BJ (cell line): ENCODE measurements at regions of chr17 and their contacts with region 1.

Region 1: DNA sequence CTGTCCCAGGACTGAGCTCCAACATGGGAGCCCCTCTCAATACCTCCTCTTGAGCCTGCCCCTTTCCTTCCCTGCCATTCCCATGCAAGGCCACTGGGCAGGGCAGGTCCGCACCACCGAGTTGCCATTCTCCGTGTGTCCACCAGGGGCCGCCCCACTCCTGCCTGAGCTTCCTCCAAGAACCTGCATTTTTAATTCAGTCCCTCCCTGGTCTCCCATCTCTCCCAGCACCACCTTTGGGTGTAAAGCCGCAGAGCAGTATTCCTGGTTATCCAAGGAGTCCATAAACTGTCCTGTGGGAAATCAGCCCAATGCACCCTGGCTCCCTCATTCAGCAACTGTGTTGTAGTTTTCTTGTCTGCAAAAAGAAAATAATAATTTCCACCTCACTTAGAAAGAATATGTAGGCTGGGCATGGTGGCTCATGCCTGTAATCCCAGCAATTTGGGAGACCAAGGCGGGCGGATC is 15.9 kb upstream of the ANKRD40CL start:
- DNase-seq: peak; percentile 27
- H3K4me3 ChIP-seq: no peak overlapping the region
- H3K27me3 ChIP-seq: no peaks in the 10 kb centered on the region
- CTCF ChIP-seq: peak; percentile 99

Region 2: GRCh38 chr17:50771991-50772785 is 11.0 kb before region 1 on chr17:
- CTCF ChIA-PET with region 1: interaction called, 40 read pairs
- POLR2A ChIA-PET with region 1: no interaction called
- DNase-seq: no peak
- H3K4me3 ChIP-seq: no peak overlapping the region
- H3K27me3 ChIP-seq: peaks cover 2% of the 10 kb centered on the region
- CTCF ChIP-seq: no peak

Region 3: DNA sequence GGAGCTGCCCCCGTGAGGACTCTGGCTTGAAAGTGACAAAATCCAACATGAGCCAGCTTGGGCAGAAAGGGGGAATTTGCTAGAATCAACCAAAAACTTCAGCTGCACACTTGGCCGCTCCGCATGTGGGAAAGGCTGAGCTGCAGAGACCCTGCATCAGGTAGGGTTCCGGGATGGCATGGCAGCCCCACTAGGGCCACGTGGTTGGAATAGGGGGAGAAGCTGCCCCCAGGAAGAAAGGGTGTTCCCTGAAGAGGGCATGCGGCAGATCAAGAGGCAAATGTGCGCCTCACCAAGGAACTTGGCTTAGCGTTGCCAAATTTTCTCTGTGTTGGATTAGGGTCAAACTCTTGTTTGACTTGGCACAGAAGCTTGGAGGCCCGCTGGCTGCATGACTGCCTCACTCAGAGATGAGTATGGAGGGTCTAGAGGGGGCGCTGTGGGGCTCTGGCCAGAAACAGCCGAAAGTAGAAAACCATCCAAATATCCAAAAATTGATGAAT is 23.0 kb after region 1 on chr17:
- CTCF ChIA-PET with region 1: interaction called, 12 read pairs
- POLR2A ChIA-PET with region 1: interaction called, 4 read pairs
- DNase-seq: no peak
- H3K4me3 ChIP-seq: no peak overlapping the region
- H3K27me3 ChIP-seq: peaks cover 6% of the 10 kb centered on the region
- CTCF ChIP-seq: no peak

Region 4: DNA sequence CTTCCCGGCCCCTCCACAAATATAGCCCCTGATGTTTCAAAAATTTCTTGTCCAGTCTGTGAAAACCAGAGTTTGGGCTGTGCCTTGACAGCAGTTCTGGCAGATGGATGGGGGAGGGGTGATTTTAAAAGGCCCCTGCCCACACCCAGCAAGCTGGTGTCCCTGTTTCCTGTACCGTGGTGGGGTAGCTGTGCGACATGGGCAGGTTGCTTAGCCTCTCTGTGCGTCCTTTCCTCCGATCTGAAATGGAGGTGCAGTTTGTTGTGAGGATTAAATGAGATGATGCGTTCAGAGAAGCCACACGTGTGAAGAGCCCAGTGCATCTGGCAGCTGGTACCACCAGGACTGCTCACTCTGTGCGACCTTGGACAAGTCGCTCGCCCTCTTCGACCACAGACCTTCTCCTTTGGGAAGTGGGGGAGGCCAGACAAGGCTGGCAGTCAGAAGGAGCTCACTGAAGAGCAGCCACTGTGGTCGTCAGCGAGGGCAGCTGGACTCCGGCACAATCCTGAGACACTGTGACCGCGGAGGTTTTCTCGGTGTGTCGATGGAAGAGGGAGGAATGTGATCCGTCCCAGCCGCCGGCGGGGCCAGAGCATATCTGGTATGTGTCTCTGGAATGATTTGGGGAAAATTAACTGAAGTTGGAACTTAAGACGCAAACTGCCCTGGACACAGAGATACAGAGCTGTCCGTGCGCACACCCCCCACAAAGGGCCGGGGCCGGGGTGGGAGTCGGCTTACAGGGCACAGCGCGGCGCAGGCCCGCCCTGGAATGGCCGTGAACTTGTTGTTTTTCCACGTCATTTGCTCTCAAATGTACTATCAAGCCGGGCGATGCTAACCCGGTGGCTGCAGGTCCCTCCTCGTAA is 51.4 kb after region 1 on chr17:
- CTCF ChIA-PET with region 1: interaction called, 41 read pairs
- POLR2A ChIA-PET with region 1: no interaction called
- DNase-seq: no peak
- H3K4me3 ChIP-seq: no peak overlapping the region
- H3K27me3 ChIP-seq: peaks cover 3% of the 10 kb centered on the region
- CTCF ChIP-seq: no peak

Region 5: DNA sequence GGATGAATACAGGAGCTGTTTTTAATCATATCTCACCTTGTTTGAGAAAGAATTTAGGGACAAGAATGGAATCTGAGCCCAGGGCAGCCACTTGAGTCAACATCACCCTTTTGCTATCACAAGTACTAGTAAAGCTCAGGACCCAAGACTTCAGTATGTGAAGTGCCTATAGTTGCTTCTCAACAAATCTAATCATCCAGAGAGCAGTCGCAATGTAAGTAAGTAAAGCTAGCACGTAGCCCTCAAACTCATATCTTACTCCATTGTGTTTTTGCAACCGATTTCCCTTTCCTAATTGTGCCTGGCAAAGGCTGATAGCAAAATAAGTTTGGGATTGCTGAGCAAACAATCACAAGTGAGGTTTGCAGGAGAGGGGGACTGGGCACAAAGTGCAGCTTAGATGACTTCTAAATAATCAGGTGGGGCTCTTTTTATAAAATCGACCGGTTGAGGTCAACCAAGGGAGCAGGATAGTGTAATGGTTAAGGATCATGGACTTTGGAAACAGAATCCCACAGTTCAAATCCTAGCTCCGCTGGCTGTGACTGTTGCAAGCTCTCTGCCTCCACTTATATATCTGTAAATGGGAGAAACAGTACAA is 69.9 kb after region 1 on chr17:
- CTCF ChIA-PET with region 1: interaction called, 164 read pairs
- POLR2A ChIA-PET with region 1: no interaction called
- DNase-seq: no peak
- H3K4me3 ChIP-seq: no peak overlapping the region
- H3K27me3 ChIP-seq: peaks cover 1% of the 10 kb centered on the region; the same call in 1 of the 2 replicates
- CTCF ChIP-seq: no peak

Region 6: DNA sequence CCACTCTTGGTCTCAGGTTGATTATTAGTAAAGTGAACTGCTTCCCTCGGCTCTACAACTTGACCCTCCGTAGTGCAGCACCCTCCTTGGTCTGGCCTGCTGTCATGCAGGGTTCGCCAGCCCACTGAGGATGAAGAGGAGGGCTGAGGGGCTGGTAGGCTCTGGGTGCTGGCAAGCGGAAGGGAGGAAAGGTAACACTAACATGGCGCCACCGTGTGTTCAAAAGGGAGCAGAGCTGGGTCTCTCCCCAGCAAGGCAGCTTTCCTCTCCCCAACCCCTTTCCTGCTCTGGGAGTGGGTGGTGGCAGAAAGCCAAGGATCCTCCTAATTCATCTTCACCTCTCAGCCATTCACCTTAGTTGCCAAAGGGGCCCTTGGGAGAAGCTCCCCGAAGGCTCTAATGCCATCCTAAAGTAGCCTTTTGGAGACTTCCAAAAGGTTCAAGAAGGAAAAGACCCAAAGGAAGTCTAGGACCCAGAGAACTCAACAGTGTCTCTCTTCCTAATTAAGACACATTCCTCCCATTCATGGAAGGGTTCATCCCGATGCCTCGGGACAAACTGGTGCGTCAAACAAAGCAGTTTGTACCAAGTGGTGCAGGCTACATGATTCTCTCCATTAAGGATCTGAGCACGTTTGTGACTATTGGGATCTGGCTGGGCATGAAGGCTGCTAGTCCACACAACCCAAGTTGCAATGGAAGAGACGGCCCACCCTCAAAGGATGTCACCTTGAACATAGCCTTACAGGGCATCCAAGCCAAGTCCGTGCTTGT is 173.7 kb after region 1 on chr17:
- CTCF ChIA-PET with region 1: interaction called, 12 read pairs
- POLR2A ChIA-PET with region 1: no interaction called
- DNase-seq: no peak
- H3K4me3 ChIP-seq: no peak overlapping the region
- H3K27me3 ChIP-seq: no peaks in the 10 kb centered on the region
- CTCF ChIP-seq: peak; percentile 82

Region 7: DNA sequence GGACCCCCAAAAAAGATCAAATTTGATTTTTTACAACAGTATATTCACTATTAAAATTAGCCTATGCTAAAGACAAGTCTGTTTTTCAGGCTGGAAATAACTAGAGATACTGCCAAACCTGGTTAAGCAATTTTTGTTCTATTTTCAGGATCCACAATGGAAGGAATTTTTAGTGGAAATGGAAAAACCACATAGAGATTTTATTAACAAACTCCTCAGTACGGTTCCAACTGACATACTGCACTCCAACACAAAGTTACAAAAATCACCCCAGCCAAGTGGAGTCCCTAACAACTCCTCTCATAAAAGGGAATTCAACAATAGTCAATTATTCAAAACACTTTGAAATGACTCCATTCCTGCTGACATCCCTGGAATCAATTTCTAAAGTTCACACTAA is 184.6 kb after region 1 on chr17:
- CTCF ChIA-PET with region 1: no interaction called
- POLR2A ChIA-PET with region 1: no interaction called
- DNase-seq: peak; percentile 50
- H3K4me3 ChIP-seq: no peak overlapping the region
- H3K27me3 ChIP-seq: no peaks in the 10 kb centered on the region
- CTCF ChIP-seq: no peak